AG04449 (cell line): ENCODE measurements at regions of chr7 and their contacts with region 1.

Region 1: GRCh38 chr7:55065079-55065478 is 46.3 kb downstream of the EGFR start:
- DNase-seq: peak; percentile 97
- H3K4me3 ChIP-seq: no peak overlapping the region
- CTCF ChIP-seq: no peak

Region 2: DNA sequence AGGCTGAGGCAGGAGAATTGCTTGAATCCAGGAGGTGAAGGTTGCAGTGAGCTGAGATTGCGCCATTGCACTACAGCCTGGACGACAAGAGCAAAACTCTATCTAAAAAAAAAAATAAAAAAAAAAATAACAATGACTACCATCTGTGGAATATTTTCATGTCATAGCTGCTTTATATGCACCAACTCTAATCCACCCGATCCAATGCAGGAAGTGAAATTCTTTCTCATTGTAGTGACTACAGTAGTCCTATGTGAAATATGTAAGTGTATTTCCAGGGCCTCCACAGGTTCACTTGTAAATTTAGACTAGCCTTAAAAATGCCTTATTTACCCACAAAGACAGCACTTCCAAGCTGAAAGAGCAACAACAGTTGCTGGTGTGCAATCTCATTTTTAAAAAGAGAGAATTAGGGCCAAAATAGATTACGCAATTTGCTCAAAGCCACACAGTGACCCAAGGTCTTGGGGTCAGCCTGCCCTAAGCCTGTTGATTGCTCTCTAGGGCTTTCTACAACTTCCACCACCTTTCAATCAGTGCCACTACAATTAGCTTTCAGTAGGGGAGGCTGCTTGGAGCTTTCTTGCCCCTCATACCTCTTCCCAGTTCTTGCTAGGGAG is 72.1 kb before region 1 on chr7:
- CTCF ChIA-PET with region 1: no interaction called
- POLR2A ChIA-PET with region 1: no interaction called
- DNase-seq: no peak
- H3K4me3 ChIP-seq: no peak overlapping the region
- CTCF ChIP-seq: no peak

Region 3: GRCh38 chr7:55048221-55048859 is 16.7 kb before region 1 on chr7:
- CTCF ChIA-PET with region 1: interaction called, 12 read pairs
- POLR2A ChIA-PET with region 1: interaction called, 12 read pairs
- DNase-seq: no peak
- H3K4me3 ChIP-seq: no peak overlapping the region
- CTCF ChIP-seq: no peak

Region 4: GRCh38 chr7:55053651-55054571 is 11.2 kb before region 1 on chr7:
- CTCF ChIA-PET with region 1: interaction called, 12 read pairs
- POLR2A ChIA-PET with region 1: interaction called, 12 read pairs
- DNase-seq: no peak
- H3K4me3 ChIP-seq: no peak overlapping the region
- CTCF ChIP-seq: no peak

Region 5: DNA sequence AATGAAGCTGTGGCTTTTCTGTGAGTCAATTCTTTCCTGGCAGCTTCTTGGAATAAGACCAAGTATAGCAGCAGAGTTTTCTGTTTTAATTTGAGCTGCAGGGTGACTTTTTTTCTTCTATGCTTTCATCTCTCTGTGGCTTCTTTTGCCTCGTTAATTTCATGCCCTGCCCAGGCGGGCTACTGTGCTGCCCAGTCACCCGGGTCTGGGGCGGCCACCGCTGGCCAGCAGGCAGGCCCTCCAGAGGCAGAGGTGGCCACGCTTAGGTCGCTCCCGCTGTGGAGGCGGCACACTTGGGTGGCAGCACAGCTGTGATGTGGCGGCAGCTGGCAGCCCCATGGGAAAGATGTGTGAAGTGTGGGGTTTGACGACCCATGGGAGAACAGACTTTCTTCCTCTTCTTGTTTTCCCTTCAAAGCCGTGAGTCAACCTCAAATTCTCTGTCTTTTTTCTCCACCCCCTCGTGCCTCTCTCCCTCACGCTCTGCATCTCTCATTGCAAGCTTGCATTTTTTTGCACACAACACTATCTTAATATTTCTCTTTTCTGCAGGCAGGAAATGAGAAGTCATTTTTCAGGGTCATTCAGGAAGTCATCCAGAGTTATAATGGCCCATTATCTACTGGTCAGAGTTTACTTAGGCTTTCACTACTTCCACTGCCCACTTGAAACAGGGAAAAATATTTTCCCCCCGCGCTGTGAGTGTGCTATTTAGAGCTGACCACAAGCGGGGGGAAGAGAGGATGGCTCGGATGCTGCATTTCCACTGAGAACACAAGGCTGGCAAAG is 21.5 kb after region 1 on chr7:
- CTCF ChIA-PET with region 1: interaction called, 5 read pairs
- POLR2A ChIA-PET with region 1: interaction called, 18 read pairs
- DNase-seq: peak; percentile 40
- H3K4me3 ChIP-seq: peak overlapping the region; percentile 49
- CTCF ChIP-seq: no peak

Region 6: DNA sequence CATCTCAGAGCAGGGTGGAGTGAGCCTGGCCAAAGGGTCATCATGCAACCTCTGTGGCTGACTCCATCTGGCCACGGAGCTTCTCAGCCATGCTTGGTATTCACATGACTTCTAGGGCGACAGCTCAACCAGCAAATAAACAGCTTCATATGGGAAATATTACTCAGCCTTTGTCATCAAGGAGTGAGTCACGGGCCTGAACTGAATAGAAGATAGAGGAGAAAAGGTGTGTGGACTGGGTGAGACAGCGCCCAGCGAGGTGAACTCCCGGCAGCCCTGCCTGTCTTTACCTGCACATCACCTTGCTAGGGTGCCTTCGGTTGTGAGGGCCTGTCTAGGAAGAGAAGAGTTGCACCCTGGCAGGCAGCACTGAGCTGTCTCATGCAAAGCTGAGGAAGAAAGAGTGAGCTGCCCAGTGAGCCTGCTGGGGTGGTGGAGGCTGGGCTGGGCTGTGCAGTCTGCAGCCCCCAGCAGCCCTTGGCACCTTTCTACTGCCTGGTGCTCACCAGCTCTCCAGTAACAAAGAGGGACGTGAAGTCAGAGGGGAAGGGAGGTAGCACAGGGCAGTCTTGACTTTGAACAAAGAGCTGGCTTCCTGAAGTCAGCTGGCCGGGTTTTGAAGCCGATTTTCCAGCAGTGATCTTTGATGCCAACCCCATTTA is 67.9 kb after region 1 on chr7:
- CTCF ChIA-PET with region 1: interaction called, 3 read pairs
- POLR2A ChIA-PET with region 1: interaction called, 13 read pairs
- DNase-seq: peak; percentile 89
- H3K4me3 ChIP-seq: no peak overlapping the region
- CTCF ChIP-seq: no peak